Activated CD4-positive, alpha-beta memory T cell treated with anti-CD3 and anti-CD28 coated beads for 36 hours (primary cell): ENCODE measurements at regions of chr20 and their contacts with region 1.

Region 1: GRCh38 chr20:34022154-34022838 is 28.6 kb downstream of the RALY start:
- DNase-seq: no peak
- H3K4me3 Mint-ChIP-seq: no peak overlapping the region
- H3K27ac Mint-ChIP-seq: peak overlapping the region; percentile 36
- H3K4me1 Mint-ChIP-seq: peaks cover 71% of the 10 kb centered on the region
- H3K27me3 Mint-ChIP-seq: no peaks in the 10 kb centered on the region

Region 2: GRCh38 chr20:33933469-33933909 is 88.8 kb before region 1 on chr20:
- CTCF ChIA-PET with region 1: interaction called, 4 read pairs
- POLR2A ChIA-PET with region 1: no interaction called
- intact Hi-C with region 1: loop called (anchors 1 kb)
- DNase-seq: peak; percentile 80
- H3K4me3 Mint-ChIP-seq: no peak overlapping the region
- H3K27ac Mint-ChIP-seq: no peak overlapping the region
- H3K4me1 Mint-ChIP-seq: peaks cover 2% of the 10 kb centered on the region
- H3K27me3 Mint-ChIP-seq: no peaks in the 10 kb centered on the region

Region 3: DNA sequence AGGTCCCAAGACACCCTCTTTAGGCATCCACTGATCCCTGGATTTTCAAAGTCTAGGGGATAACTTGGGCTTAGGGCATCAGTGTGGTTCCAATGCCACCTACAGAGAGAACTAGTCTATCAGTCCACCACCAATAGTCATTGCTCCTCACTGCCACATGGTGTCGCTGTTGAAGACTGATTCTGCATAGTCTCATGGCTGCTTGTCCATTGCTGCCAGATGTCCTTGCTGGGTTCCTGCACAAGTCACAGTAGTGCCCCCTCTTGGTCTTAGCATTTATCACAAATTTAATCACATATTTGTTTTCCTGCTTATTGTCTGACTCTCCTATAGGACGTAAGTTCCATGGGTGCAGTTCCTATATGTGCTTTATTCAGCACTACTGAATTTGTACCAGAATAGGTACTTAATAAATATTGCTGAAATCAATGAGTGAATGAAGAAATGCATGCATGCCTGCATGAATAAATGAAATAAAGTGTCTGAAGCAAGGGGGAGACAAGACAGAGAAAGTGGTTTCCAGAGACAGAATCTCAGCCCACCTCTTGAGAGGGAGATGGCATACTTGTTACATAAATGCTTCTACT is 74.5 kb before region 1 on chr20:
- CTCF ChIA-PET with region 1: no interaction called
- POLR2A ChIA-PET with region 1: no interaction called
- intact Hi-C with region 1: loop called (anchors 5 kb)
- DNase-seq: peak; percentile 60
- H3K4me3 Mint-ChIP-seq: no peak overlapping the region
- H3K27ac Mint-ChIP-seq: no peak overlapping the region
- H3K4me1 Mint-ChIP-seq: no peaks in the 10 kb centered on the region
- H3K27me3 Mint-ChIP-seq: peaks cover 9% of the 10 kb centered on the region

Region 4: GRCh38 chr20:33963751-33964150 is 58.5 kb before region 1 on chr20:
- CTCF ChIA-PET with region 1: no interaction called
- POLR2A ChIA-PET with region 1: no interaction called
- intact Hi-C with region 1: no loop called
- DNase-seq: no peak
- H3K4me3 Mint-ChIP-seq: no peak overlapping the region
- H3K27ac Mint-ChIP-seq: no peak overlapping the region
- H3K4me1 Mint-ChIP-seq: no peaks in the 10 kb centered on the region
- H3K27me3 Mint-ChIP-seq: peaks cover 7% of the 10 kb centered on the region

Region 5: GRCh38 chr20:34010405-34010931 is 11.8 kb before region 1 on chr20:
- CTCF ChIA-PET with region 1: interaction called, 10 read pairs
- POLR2A ChIA-PET with region 1: interaction called, 3 read pairs
- intact Hi-C with region 1: no loop called
- DNase-seq: no peak
- H3K4me3 Mint-ChIP-seq: no peak overlapping the region
- H3K27ac Mint-ChIP-seq: no peak overlapping the region
- H3K4me1 Mint-ChIP-seq: peaks cover 81% of the 10 kb centered on the region
- H3K27me3 Mint-ChIP-seq: no peaks in the 10 kb centered on the region

Region 6: DNA sequence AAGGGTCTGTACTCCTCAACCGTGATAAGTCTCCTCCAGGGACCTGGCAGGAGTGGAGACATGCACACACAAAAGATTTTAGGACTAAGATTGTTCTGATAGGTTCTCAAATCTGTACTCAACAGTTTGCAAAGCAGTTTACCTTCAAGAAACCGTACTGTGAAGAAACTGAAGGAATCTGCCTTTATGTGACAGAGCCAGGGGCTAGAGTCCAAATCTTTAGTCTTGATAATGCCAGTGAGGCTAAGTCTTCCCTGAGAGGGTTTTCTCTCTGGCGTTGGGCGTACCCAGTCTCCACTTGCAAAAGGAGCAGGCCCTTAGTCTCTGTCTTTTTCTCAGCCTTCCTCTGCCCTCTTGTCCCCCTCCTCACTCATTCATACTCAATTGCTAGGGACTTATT is 18.9 kb after region 1 on chr20:
- CTCF ChIA-PET with region 1: no interaction called
- POLR2A ChIA-PET with region 1: no interaction called
- intact Hi-C with region 1: no loop called
- DNase-seq: no peak
- H3K4me3 Mint-ChIP-seq: no peak overlapping the region
- H3K27ac Mint-ChIP-seq: no peak overlapping the region
- H3K4me1 Mint-ChIP-seq: peaks cover 78% of the 10 kb centered on the region
- H3K27me3 Mint-ChIP-seq: no peaks in the 10 kb centered on the region